Naive thymus-derived CD8-positive, alpha-beta T cell (primary cell): ENCODE measurements at regions of chr6 and their contacts with region 1.

Region 1: DNA sequence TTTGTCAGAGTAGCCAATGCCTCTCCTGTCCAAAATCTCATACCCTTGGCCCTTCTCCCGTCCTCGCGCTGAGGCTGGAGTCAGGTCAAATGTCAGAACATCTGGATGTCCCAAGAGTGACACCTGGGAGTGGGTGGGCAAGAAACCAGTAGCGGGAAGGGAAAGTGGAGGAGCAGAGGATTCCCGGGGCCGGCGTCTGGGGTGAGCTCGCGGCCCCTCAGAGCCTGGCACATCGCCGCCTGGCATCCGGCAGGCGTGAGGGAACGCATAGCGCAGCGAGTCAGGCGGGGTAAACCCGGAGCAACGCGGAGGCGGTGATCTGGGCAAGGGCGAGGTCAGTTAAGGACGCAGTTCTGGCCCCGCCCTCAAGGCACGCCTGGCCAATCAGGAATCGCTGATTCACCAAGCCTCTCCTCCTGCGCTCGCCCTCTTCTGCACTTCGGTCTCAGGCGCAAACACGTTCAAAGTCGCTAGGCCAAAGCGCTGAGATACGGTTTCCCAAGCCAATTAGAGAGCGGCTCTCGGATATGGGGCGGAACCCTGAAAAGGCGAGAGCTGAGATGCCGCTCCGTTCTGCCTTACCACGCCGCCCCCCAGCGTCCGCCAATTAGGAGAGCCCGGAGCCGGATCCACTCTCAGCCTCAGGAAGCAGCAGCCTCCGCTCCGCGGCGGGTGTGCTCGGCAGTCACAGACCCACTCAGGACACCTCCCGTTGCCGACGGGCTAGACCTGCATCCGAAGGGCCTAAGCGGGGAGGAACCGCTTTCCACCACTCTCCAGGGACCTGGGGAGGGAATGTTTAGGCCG is 22.5 kb downstream of the VPS52 start:
- DNase-seq: peak; percentile 87 to 98 (median 95)
- ATAC-seq: peak; percentile 86 to 89
- H3K4me3 Mint-ChIP-seq: peak overlapping the region; percentile 83 to 94 (median 90)
- H3K27ac Mint-ChIP-seq: peak overlapping the region; percentile 91 to 99 (median 98)
- H3K4me1 Mint-ChIP-seq: peaks cover 22 to 41% (median 38%) of the 10 kb centered on the region in 4 donors
- H3K27me3 Mint-ChIP-seq: no peaks in the 10 kb centered on the region

Region 2: GRCh38 chr6:33112148-33112547 is 137.0 kb before region 1 on chr6:
- POLR2A ChIA-PET with region 1: no interaction called
- DNase-seq: peak in 5 of 10 donors; percentile 31 to 54 (median 38)
- ATAC-seq: peak; percentile 97 to 99
- H3K4me3 Mint-ChIP-seq: peak overlapping the region in 1 of 10 donors; percentile 6
- H3K27ac Mint-ChIP-seq: peak overlapping the region in 2 of 10 donors; percentile 4 to 47
- H3K4me1 Mint-ChIP-seq: peaks cover 4 to 41% (median 11%) of the 10 kb centered on the region in 4 donors
- H3K27me3 Mint-ChIP-seq: peaks cover 29 to 87% (median 55%) of the 10 kb centered on the region in 5 donors

Region 3: GRCh38 chr6:33183071-33183683 is 66.0 kb before region 1 on chr6:
- POLR2A ChIA-PET with region 1: interaction called, 12 read pairs
- DNase-seq: peak in 1 of 10 donors; percentile 26
- ATAC-seq: peak; percentile 25 to 50
- H3K4me3 Mint-ChIP-seq: peak overlapping the region; percentile 51 to 76 (median 65)
- H3K27ac Mint-ChIP-seq: peak overlapping the region; percentile 46 to 97 (median 87)
- H3K4me1 Mint-ChIP-seq: peaks cover 22 to 34% (median 26%) of the 10 kb centered on the region in 4 donors
- H3K27me3 Mint-ChIP-seq: peaks cover 5 to 14% (median 11%) of the 10 kb centered on the region in 5 donors

Region 4: GRCh38 chr6:33208091-33208967 is 40.8 kb before region 1 on chr6 and contains the start of gene RING1:
- POLR2A ChIA-PET with region 1: interaction called, 37 read pairs
- DNase-seq: peak; percentile 79 to 91 (median 87)
- ATAC-seq: peak; percentile 58 to 69
- H3K4me3 Mint-ChIP-seq: peak within 1 kb of the TSS; percentile 84 to 99 (median 94)
- H3K27ac Mint-ChIP-seq: peak within 1 kb of the TSS; percentile 88 to 98 (median 96)
- H3K4me1 Mint-ChIP-seq: peaks cover 38 to 66% (median 61%) of the 10 kb centered on the region in 4 donors
- H3K27me3 Mint-ChIP-seq: peaks cover 0 to 3% (median 0%) of the 10 kb centered on the region in 5 donors
- polyA plus RNA-seq, gene RING1: 12.1 to 12.5 (median 12.4) TPM

Region 5: DNA sequence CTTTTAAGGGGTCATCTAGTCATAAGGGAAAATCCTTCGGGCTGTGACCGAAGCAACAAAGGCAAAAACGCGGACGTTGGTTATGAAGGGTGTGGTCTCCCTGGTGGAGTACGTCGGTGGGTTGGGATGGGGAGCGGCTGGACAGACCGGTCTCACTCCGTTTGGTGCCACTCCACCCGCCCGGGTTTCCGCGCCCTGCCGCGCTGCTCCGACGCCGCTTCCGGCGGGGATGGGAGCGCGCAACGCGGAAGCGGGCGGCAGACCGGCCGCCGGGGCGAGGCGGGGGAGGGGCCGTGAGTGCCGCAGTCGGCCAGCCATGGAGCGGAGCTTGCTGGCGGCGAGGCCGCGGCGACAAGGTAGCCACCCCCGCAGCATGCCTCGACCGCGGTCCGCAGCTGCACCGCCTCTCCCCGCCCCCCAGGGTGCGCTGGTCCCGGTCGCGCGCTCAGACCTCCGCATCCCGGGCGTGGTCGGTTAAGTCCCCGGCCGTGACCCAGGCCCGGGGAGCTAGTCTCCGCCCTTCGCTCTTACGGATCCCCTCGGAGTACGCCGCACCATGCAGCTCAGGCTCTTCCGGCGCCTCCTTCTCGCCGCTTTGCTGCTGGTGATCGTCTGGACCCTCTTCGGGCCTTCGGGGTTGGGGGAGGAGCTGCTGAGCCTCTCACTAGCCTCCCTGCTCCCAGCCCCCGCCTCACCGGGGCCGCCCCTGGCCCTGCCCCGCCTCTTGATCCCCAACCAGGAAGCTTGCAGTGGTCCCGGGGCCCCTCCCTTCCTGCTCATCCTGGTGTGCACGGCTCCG is 27.9 kb after region 1 on chr6 and contains the start of gene B3GALT4:
- POLR2A ChIA-PET with region 1: interaction called, 84 read pairs
- DNase-seq: peak; percentile 37 to 78 (median 64)
- ATAC-seq: peak; percentile 72 to 76
- H3K4me3 Mint-ChIP-seq: peak within 1 kb of the TSS; percentile 88 to 96 (median 92)
- H3K27ac Mint-ChIP-seq: peak within 1 kb of the TSS; percentile 72 to 97 (median 94)
- H3K4me1 Mint-ChIP-seq: peaks cover 34 to 80% (median 77%) of the 10 kb centered on the region in 4 donors
- H3K27me3 Mint-ChIP-seq: no peaks in the 10 kb centered on the region
- polyA plus RNA-seq, gene B3GALT4: 14.5 to 20.4 (median 18.7) TPM

Region 6: GRCh38 chr6:33299237-33299944 is 50.3 kb after region 1 on chr6:
- POLR2A ChIA-PET with region 1: interaction called, 20 read pairs
- DNase-seq: peak; percentile 86 to 95 (median 92)
- ATAC-seq: peak; percentile 82 to 88
- H3K4me3 Mint-ChIP-seq: peak overlapping the region; percentile 94 to 100 (median 98)
- H3K27ac Mint-ChIP-seq: peak overlapping the region; percentile 94 to 100 (median 99)
- H3K4me1 Mint-ChIP-seq: peaks cover 20 to 49% (median 43%) of the 10 kb centered on the region in 4 donors
- H3K27me3 Mint-ChIP-seq: peaks cover 0 to 2% (median 0%) of the 10 kb centered on the region in 5 donors